Caco-2 (cell line): ENCODE measurements at regions of chr20 and their contacts with region 1.

Region 1: DNA sequence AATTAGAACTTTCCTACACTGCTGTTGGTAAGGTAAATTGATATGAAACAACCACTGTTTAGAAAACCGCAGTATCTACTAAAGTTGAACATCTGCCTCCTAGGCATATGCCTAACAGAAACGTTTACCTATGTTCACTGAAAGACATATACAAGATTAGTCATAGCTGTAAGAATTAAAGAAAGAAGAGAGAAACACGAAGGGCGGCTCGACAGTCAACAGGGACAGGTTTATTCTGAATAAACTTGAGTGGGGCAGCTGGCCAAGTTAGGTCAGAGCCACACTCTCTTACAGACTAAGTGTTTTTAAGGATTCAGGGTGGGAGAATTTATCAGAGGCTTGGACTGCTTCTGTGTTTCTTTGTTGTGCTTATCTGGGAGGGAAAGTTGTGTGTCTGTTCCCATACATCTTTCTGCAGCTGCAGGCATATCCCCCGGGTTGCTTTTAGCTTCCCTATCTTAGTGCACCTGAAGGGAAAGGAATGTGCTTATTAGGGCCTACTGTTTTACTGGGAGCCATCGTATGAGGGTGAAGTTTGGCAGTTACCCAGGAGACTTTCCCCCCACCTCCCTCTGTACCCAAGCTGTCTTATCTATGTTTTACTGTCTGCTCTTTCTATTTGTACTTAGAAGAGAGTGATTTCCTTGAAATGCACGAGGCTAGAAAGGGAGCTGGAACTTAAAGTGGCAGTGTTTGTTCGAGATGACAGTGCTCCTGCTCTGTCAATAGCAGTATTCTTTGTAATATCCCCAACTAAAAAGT is 20.4 kb downstream of the PROCR start:
- DNase-seq: peak; percentile 48 to 59
- H3K4me3 ChIP-seq: no peak overlapping the region
- H3K4me3 Mint-ChIP-seq: no peak overlapping the region
- H3K27ac Mint-ChIP-seq: peak overlapping the region; percentile 29
- H3K4me1 ChIP-seq: peaks cover 55% of the 10 kb centered on the region
- H3K4me1 Mint-ChIP-seq: peaks cover 46% of the 10 kb centered on the region
- H3K27me3 ChIP-seq: no peaks in the 10 kb centered on the region
- H3K27me3 Mint-ChIP-seq: no peaks in the 10 kb centered on the region
- CTCF ChIP-seq: no peak

Region 2: GRCh38 chr20:35013421-35014411 is 178.6 kb before region 1 on chr20:
- CTCF ChIA-PET with region 1: no interaction called
- POLR2A ChIA-PET with region 1: no interaction called
- intact Hi-C with region 1: no loop called
- DNase-seq: peak in 1 of 2 experiments; percentile 31
- H3K4me3 ChIP-seq: no peak overlapping the region
- H3K4me3 Mint-ChIP-seq: no peak overlapping the region
- H3K27ac Mint-ChIP-seq: no peak overlapping the region
- H3K4me1 ChIP-seq: no peaks in the 10 kb centered on the region
- H3K4me1 Mint-ChIP-seq: no peaks in the 10 kb centered on the region
- H3K27me3 ChIP-seq: no peaks in the 10 kb centered on the region
- H3K27me3 Mint-ChIP-seq: no peaks in the 10 kb centered on the region
- CTCF ChIP-seq: no peak

Region 3: GRCh38 chr20:35174458-35175216 is 17.7 kb before region 1 on chr20:
- CTCF ChIA-PET with region 1: no interaction called
- POLR2A ChIA-PET with region 1: interaction called, 4 read pairs
- intact Hi-C with region 1: loop called (anchors 1 kb)
- DNase-seq: peak; percentile 93 to 97
- H3K4me3 ChIP-seq: peak overlapping the region; percentile 60
- H3K4me3 Mint-ChIP-seq: peak overlapping the region; percentile 91
- H3K27ac Mint-ChIP-seq: peak overlapping the region; percentile 81
- H3K4me1 ChIP-seq: peaks cover 48% of the 10 kb centered on the region
- H3K4me1 Mint-ChIP-seq: peaks cover 53% of the 10 kb centered on the region
- H3K27me3 ChIP-seq: no peaks in the 10 kb centered on the region
- H3K27me3 Mint-ChIP-seq: no peaks in the 10 kb centered on the region
- CTCF ChIP-seq: no peak